ENCODE measurements at regions of chr1 and their contacts with region 1.

Region 1: DNA sequence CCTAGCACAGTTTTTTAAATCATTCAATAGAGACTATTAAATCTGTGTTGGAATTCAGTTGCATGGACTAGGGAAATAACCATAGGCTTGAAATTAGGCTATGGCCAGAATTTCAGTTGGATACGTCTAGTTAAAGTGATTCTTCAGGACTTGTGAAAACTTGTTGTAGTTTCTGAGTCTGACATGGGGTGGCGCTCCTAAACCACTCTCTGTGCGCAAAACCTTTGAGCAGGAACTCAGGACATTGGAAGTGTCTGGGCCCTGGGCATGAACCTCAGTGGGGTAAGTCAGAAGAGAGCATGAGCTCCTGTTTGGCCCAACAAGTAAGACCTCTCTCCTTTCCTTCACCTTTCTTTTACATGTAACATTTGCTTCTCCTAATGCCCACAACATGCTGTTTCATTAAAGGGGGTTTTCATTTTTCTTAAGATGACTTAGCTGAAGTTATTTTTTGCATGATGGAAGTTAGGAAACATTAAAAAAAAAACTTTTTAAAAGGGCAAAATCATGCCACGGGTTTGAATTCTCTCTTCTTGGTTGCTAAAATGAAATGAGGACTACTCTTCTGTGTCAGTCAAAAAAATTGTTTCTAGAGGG is 17.1 kb upstream of the CCDC190 start:
- DNase-seq: peak; percentile 85
- H3K4me3 ChIP-seq: no peak overlapping the region
- H3K27ac ChIP-seq: no peak overlapping the region
- H3K4me1 ChIP-seq: peaks cover 24% of the 10 kb centered on the region
- H3K27me3 ChIP-seq: no peaks in the 10 kb centered on the region
- CTCF ChIP-seq: peak; percentile 71 to 80
- POLR2A ChIP-seq: no peak

Region 2: GRCh38 chr1:162854245-162854882 is 23.7 kb before region 1 on chr1:
- CTCF ChIA-PET with region 1: interaction called, 80 read pairs
- POLR2A ChIA-PET with region 1: interaction called, 10 read pairs
- dilution Hi-C with region 1: no loop called
- intact Hi-C with region 1: loop called (anchors 1 kb)
- DNase-seq: peak; percentile 82
- H3K4me3 ChIP-seq: peak overlapping the region in 1 of 3 experiments; percentile 4
- H3K27ac ChIP-seq: peak overlapping the region; percentile 93
- H3K4me1 ChIP-seq: peaks cover 57% of the 10 kb centered on the region
- H3K27me3 ChIP-seq: no peaks in the 10 kb centered on the region
- CTCF ChIP-seq: peak; percentile 63 to 68
- POLR2A ChIP-seq: peak; percentile 7

Region 3: DNA sequence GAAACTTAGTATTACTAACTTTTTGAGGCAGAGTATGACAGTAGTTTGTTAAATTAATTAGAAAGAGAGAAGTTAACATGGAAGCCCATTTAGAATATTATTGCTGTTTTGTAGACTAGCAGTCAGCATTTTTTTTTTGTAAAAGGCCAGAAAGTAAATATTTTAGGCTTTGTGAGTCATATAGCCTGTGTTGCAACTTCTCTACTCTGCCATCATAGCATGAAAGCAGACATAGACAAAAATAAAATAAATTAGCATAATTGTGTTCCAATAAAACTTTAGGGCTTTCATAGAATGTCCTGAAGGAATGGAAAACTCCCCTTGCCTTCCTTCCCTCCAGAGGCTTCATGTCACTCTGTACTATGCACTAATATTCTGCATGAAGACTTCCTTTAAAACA is 178.7 kb after region 1 on chr1:
- CTCF ChIA-PET with region 1: interaction called, 13 read pairs
- POLR2A ChIA-PET with region 1: no interaction called
- dilution Hi-C with region 1: loop called (anchors 25 kb)
- intact Hi-C with region 1: no loop called
- DNase-seq: no peak
- H3K4me3 ChIP-seq: no peak overlapping the region
- H3K27ac ChIP-seq: no peak overlapping the region
- H3K4me1 ChIP-seq: no peaks in the 10 kb centered on the region
- H3K27me3 ChIP-seq: no peaks in the 10 kb centered on the region
- CTCF ChIP-seq: no peak
- POLR2A ChIP-seq: no peak

Region 4: GRCh38 chr1:163174524-163175437 is 296.7 kb after region 1 on chr1:
- CTCF ChIA-PET with region 1: interaction called, 63 read pairs
- POLR2A ChIA-PET with region 1: interaction called, 4 read pairs
- dilution Hi-C with region 1: loop called (anchors 25 kb)
- intact Hi-C with region 1: loop called (anchors 1 kb)
- DNase-seq: peak; percentile 77
- H3K4me3 ChIP-seq: no peak overlapping the region
- H3K27ac ChIP-seq: no peak overlapping the region
- H3K4me1 ChIP-seq: peaks cover 54% of the 10 kb centered on the region
- H3K27me3 ChIP-seq: no peaks in the 10 kb centered on the region
- CTCF ChIP-seq: peak; percentile 77 to 90
- POLR2A ChIP-seq: no peak

Measured in endothelial cell of umbilical vein (primary cell).